ENCODE measurements at regions of chr4 and their contacts with region 1.

Region 1: GRCh38 chr4:30443289-30443688 is 276.9 kb upstream of the PCDH7 start:
- DNase-seq: no peak

Region 2: DNA sequence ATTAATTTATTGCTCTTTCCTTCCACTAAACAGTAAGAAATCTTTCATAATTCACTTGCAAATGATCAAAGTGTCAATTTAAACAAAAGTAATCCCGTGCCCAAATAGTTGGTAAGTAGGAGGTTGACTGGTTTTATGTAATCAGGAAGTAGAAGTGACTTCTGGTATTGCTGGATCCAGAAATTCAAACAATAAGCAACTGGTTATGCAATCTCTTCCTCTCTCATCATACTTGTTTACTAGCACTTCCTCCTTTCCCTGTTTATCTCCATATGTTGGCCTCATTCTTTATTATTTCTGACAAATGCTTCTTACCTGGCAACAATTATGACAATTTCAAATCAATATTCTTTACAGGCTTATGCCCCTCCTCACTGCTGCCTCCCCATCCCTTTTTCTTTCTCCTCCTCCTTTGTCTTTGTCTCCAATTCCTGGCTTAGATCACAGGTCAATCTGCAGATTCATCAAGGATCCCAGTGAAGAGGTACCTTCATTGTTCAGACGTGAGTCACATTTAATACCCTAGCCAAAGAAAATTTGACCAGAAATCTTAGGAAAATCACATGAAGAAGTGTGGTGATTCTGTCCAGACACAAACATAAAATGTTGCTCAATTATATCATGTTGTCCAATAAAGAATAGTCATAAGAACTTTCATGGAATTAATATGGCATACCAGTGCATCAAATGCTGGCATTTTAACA is 46.4 kb before region 1 on chr4:
- intact Hi-C with region 1: no loop called
- DNase-seq: no peak

Region 3: GRCh38 chr4:30429813-30430761 is 13.2 kb before region 1 on chr4:
- intact Hi-C with region 1: loop called in 1 of 2 experiments (anchors 1 kb)
- DNase-seq: no peak